Mammary epithelial cell (primary cell): ENCODE measurements at regions of chr1 and their contacts with region 1.

Region 1: DNA sequence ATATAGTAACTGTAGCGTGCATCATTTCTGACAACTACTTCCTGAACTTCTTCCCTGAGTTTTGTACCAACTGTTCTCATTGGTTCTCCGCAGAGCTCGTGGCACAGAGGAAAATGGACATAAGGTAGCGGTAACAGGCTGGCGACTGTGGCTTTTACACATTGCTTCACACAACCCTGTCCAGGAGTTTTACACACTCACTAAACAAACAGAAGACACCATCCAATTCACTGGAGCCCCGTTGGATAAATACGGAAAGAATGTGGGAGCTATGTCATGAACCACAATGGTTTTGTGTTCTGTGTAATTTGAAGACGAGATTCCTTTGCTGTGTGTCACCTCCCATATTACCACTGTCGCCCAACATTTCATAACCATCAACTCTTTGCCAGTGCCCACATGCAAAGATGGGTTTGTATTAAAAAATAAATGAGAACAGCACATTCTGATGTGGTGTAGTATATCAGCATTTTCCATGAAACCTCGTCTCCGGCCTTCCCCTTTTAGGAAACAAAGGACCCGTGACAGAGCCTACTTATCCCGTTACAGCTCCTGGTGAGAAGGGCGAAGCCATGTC is 47.3 kb upstream of the ENAH start:
- DNase-seq: peak; percentile 100
- H3K4me3 ChIP-seq: no peak overlapping the region
- H3K27ac ChIP-seq: peak overlapping the region; percentile 79
- H3K4me1 ChIP-seq: peaks cover 19% of the 10 kb centered on the region
- H3K27me3 ChIP-seq: no peaks in the 10 kb centered on the region
- CTCF ChIP-seq: no peak

Region 2: DNA sequence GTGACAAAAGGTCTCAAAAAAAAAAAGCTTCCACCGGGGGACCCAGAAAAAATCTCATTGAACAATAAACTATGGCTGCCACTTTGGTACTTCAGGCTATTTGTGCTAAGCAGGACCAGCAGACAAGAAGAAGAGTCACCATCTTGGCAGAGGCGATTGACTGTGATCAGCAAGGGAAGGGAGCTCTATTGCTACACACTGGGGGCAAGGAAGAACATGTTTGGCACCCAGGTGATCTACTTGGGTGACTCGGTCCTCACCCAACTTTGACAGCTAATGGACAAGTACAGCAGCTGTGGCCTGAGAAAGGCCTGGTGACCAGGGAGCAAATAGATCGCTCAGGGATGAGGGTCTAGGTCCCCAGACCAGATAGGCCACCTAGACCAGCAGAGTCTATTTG is 24.0 kb after region 1 on chr1:
- CTCF ChIA-PET with region 1: no interaction called
- dilution Hi-C with region 1: no loop called
- in situ Hi-C with region 1: no loop called
- intact Hi-C with region 1: no loop called
- DNase-seq: no peak
- H3K4me3 ChIP-seq: no peak overlapping the region
- H3K27ac ChIP-seq: no peak overlapping the region
- H3K4me1 ChIP-seq: no peaks in the 10 kb centered on the region
- H3K27me3 ChIP-seq: no peaks in the 10 kb centered on the region
- CTCF ChIP-seq: no peak

Region 3: DNA sequence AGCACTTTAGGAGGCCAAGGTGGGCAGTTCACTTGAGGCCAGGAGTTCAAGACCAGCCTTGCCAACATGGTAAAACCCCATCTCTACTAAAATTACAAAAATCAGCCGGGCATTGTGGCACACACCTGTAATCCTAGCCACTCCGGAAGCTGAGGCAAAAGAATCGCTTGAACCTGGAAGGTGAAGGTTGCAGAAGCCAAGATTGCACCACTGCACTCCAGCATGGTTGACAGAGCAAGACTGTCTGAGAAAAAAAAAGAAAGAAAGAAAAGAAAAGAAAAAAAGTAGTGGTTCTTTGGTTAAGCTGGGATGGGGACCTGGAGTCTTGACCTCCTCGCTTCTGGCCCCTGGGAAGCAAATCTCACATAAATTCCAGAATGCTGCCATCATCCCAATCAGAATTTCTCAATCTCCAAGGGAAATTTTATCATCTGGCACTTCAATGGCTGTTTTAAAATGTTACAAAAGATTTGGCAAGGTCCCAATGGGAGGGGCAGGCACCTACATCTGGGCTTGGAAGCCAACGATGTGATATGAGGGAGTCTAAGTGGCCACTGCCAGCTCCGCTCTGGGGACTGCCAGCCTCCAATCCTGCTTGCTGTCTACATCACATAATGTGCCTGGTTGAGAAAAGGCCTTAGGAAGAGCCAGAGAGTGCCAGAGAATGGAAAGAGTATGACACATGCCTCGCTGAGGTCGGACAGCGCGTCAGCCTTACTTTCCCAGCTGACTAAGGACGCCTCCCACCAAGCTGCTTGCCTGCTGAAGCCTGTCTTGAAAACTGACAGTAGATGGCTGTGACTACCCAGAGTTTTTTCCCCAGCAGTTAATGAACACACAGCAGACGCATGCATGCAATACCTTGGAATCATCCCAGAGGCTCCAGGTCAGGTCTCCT is 35.2 kb after region 1 on chr1:
- CTCF ChIA-PET with region 1: no interaction called
- dilution Hi-C with region 1: loop called (anchors 5 kb)
- in situ Hi-C with region 1: no loop called
- intact Hi-C with region 1: loop called (anchors 2 kb)
- DNase-seq: peak; percentile 97
- H3K4me3 ChIP-seq: peak overlapping the region in 1 of 3 experiments; percentile 31
- H3K27ac ChIP-seq: peak overlapping the region; percentile 72
- H3K4me1 ChIP-seq: peaks cover 29% of the 10 kb centered on the region
- H3K27me3 ChIP-seq: no peaks in the 10 kb centered on the region
- CTCF ChIP-seq: peak; percentile 9 to 31